Colonic mucosa (tissue), 4 donors: ENCODE measurements at regions of chr11 and their contacts with region 1.

Region 1: DNA sequence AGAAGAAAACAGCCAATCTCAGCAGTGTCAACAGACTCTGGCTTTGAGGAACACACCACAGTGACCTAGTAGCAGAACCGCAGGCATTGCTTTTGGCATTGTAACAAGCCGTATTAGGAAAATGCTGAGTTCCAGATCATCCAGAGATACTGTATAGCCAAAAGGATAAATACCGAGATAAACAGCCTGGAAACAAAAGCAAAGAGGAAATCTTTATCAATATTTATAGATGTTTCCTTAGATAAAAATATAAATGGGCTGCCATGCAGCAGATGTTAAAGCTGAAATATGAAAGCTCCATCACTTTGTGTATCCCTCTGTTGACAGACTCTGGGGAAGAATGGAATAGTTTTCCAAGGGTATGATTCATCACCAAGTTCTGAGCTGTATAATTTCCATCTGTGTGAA is 98.9 kb upstream of the TP53AIP1 start:
- DNase-seq: no peak
- H3K4me3 ChIP-seq: no peak overlapping the region
- H3K27ac ChIP-seq: no peak overlapping the region
- H3K4me1 ChIP-seq: no peaks in the 10 kb centered on the region
- H3K27me3 ChIP-seq: no peaks in the 10 kb centered on the region
- CTCF ChIP-seq: no peak

Region 2: GRCh38 chr11:129023970-129024676 is 17.5 kb before region 1 on chr11:
- intact Hi-C with region 1: loop called (anchors 1 kb)
- DNase-seq: peak; percentile 91
- H3K4me3 ChIP-seq: peak overlapping the region; percentile 29
- H3K27ac ChIP-seq: peak overlapping the region; percentile 39
- H3K4me1 ChIP-seq: no peaks in the 10 kb centered on the region
- H3K27me3 ChIP-seq: no peaks in the 10 kb centered on the region
- CTCF ChIP-seq: no peak

Region 3: GRCh38 chr11:129267716-129268115 is 226.1 kb after region 1 on chr11:
- intact Hi-C with region 1: no loop called
- DNase-seq: no peak
- H3K4me3 ChIP-seq: no peak overlapping the region
- H3K27ac ChIP-seq: no peak overlapping the region
- H3K4me1 ChIP-seq: no peaks in the 10 kb centered on the region
- H3K27me3 ChIP-seq: no peaks in the 10 kb centered on the region
- CTCF ChIP-seq: no peak